ENCODE measurements at regions of chr14 and their contacts with region 1.

Region 1: GRCh38 chr14:36647824-36648753 is 13.6 kb upstream of the PAX9 start:
- DNase-seq: peak; percentile 70
- ATAC-seq: peak; percentile 83
- H3K4me3 Mint-ChIP-seq: peak overlapping the region; percentile 69
- H3K27ac Mint-ChIP-seq: no peak overlapping the region
- H3K4me1 Mint-ChIP-seq: peaks cover 8% of the 10 kb centered on the region
- H3K27me3 Mint-ChIP-seq: peaks cover 100% of the 10 kb centered on the region
- CTCF ChIP-seq: no peak; the same call in 1 of the 2 replicates

Region 2: GRCh38 chr14:36320200-36320896 is 327.7 kb before region 1 on chr14 and contains the start of gene MBIP:
- CTCF ChIA-PET with region 1: no interaction called
- POLR2A ChIA-PET with region 1: no interaction called
- DNase-seq: peak; percentile 89
- ATAC-seq: peak; percentile 99
- H3K4me3 Mint-ChIP-seq: peak within 1 kb of the TSS; percentile 85
- H3K27ac Mint-ChIP-seq: peak within 1 kb of the TSS; percentile 97
- H3K4me1 Mint-ChIP-seq: peaks cover 26% of the 10 kb centered on the region
- H3K27me3 Mint-ChIP-seq: peaks cover 18% of the 10 kb centered on the region
- CTCF ChIP-seq: no peak
- total RNA-seq, gene MBIP: 18.1 to 19.5 TPM (median 18.4 TPM) in 3 replicates

Region 3: GRCh38 chr14:36333119-36333518 is 315.0 kb before region 1 on chr14:
- CTCF ChIA-PET with region 1: no interaction called
- POLR2A ChIA-PET with region 1: no interaction called
- DNase-seq: no peak
- ATAC-seq: no peak
- H3K4me3 Mint-ChIP-seq: no peak overlapping the region
- H3K27ac Mint-ChIP-seq: no peak overlapping the region
- H3K4me1 Mint-ChIP-seq: no peaks in the 10 kb centered on the region
- H3K27me3 Mint-ChIP-seq: peaks cover 2% of the 10 kb centered on the region; the same call in 1 of the 2 replicates
- CTCF ChIP-seq: no peak

Region 4: GRCh38 chr14:36626151-36626550 is 21.9 kb before region 1 on chr14:
- CTCF ChIA-PET with region 1: interaction called, 11 read pairs
- POLR2A ChIA-PET with region 1: no interaction called
- DNase-seq: no peak
- ATAC-seq: no peak
- H3K4me3 Mint-ChIP-seq: no peak overlapping the region
- H3K27ac Mint-ChIP-seq: no peak overlapping the region
- H3K4me1 Mint-ChIP-seq: peaks cover 6% of the 10 kb centered on the region; the same call in 1 of the 2 replicates
- H3K27me3 Mint-ChIP-seq: peaks cover 12% of the 10 kb centered on the region
- CTCF ChIP-seq: no peak

Region 5: DNA sequence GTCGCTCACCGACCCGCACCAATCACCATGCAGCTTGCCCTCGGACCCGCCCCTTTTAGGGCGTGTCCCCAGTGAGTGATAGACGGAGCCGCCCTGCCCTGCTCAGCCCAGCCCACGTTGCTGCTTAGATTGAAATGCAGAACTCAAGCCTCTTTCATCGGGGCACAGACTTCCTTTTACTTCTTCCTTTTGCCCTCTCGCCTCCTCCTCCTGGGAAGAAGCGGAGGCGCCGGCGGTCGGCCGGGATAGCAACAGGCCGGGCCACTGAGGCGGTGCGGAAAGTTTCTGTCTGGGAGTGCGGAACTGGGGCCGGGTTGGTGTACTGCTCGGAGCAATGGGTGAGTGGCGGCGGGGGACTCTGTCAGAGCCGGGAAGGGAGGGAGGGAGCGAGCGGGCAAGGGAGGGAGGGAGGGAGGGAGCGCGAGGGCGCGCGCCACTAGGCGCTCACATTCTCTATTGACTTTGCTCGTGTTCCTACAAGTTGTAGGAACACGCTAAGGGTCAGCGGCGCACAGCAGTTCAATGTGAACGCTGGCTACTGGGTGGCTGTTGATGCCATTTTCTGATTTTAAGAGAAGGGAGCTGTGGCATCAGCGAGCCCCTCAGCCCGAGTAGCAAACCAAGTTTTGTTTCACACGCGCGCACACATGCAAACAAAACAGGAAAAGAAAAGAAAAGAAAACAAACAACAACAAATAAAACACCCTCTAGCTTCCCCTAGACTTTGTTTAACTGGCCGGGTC is 13.8 kb after region 1 on chr14 and contains the start of gene PAX9:
- CTCF ChIA-PET with region 1: interaction called, 43 read pairs
- POLR2A ChIA-PET with region 1: no interaction called
- DNase-seq: peak; percentile 96
- ATAC-seq: peak; percentile 81
- H3K4me3 Mint-ChIP-seq: peak within 1 kb of the TSS; percentile 76
- H3K27ac Mint-ChIP-seq: no peak within 1 kb of the TSS
- H3K4me1 Mint-ChIP-seq: peaks cover 51% of the 10 kb centered on the region
- H3K27me3 Mint-ChIP-seq: peaks cover 100% of the 10 kb centered on the region
- CTCF ChIP-seq: no peak
- total RNA-seq, gene PAX9: not detected in 3 replicates

Region 6: GRCh38 chr14:36682338-36682737 is 34.2 kb after region 1 on chr14:
- CTCF ChIA-PET with region 1: interaction called, 10 read pairs
- POLR2A ChIA-PET with region 1: no interaction called
- DNase-seq: no peak
- ATAC-seq: no peak
- H3K4me3 Mint-ChIP-seq: no peak overlapping the region
- H3K27ac Mint-ChIP-seq: 0 out of 2 replicates have a peak overlapping the region, but pooled peaks have one; percentile 34
- H3K4me1 Mint-ChIP-seq: peaks cover 54% of the 10 kb centered on the region
- H3K27me3 Mint-ChIP-seq: no peaks in the 10 kb centered on the region
- CTCF ChIP-seq: no peak

Region 7: DNA sequence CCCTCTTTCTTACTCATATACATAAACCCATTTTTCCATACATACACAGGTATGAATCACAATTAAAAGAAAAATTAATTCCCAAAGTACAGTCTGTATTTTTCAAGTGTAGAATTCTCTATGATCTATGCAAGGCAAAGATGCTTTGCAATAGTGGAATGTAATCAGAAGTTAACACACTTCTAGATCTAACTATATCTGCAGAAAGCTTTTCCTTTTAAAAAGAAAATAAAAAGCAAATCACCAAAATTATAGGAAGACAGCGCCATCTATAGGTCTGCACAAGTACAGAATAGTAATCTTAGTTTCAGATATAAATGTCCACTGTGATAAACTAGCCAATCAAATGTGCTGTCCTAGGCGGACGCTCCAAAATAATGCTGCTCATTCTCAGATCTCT is 502.3 kb after region 1 on chr14:
- CTCF ChIA-PET with region 1: interaction called, 21 read pairs
- POLR2A ChIA-PET with region 1: no interaction called
- DNase-seq: no peak
- ATAC-seq: peak; percentile 68
- H3K4me3 Mint-ChIP-seq: no peak overlapping the region
- H3K27ac Mint-ChIP-seq: no peak overlapping the region
- H3K4me1 Mint-ChIP-seq: no peaks in the 10 kb centered on the region
- H3K27me3 Mint-ChIP-seq: no peaks in the 10 kb centered on the region
- CTCF ChIP-seq: peak; percentile 63

Measured in WTC11 (cell line).